ENCODE measurements at regions of chr18 and their contacts with region 1.

Region 1: GRCh38 chr18:75209129-75209950 is at the start of gene PTGR3:
- DNase-seq: peak; percentile 40
- ATAC-seq: peak; percentile 56
- H3K4me3 ChIP-seq: peak within 1 kb of the TSS; percentile 96
- H3K27ac ChIP-seq: peak within 1 kb of the TSS; percentile 86
- H3K4me1 ChIP-seq: peaks cover 6% of the 10 kb centered on the region; the same call in 1 of the 2 replicates
- H3K27me3 ChIP-seq: no peaks in the 10 kb centered on the region
- CTCF ChIP-seq: no peak
- EP300 ChIP-seq: no peak
- POLR2A ChIP-seq: peak; percentile 74
- RAD21 ChIP-seq: no peak
- polyA plus RNA-seq, gene PTGR3: 6.2 to 8.8 TPM

Region 2: GRCh38 chr18:74412116-74412880 is 797.0 kb before region 1 on chr18:
- CTCF ChIA-PET with region 1: no interaction called
- POLR2A ChIA-PET with region 1: no interaction called
- RAD21 ChIA-PET with region 1: no interaction called
- SMC1A ChIA-PET with region 1: no interaction called
- in situ Hi-C with region 1: no loop called
- intact Hi-C with region 1: no loop called
- DNase-seq: no peak
- ATAC-seq: no peak
- H3K4me3 ChIP-seq: no peak overlapping the region
- H3K27ac ChIP-seq: no peak overlapping the region
- H3K4me1 ChIP-seq: peaks cover 10% of the 10 kb centered on the region
- H3K27me3 ChIP-seq: peaks cover 4% of the 10 kb centered on the region in 2 experiments; a peak in 3 of 4 replicates
- CTCF ChIP-seq: no peak
- EP300 ChIP-seq: no peak
- POLR2A ChIP-seq: no peak
- RAD21 ChIP-seq: no peak

Region 3: GRCh38 chr18:74495581-74496507 is 713.5 kb before region 1 on chr18 and contains the start of gene CNDP2:
- CTCF ChIA-PET with region 1: no interaction called
- POLR2A ChIA-PET with region 1: no interaction called
- RAD21 ChIA-PET with region 1: no interaction called
- SMC1A ChIA-PET with region 1: no interaction called
- in situ Hi-C with region 1: no loop called
- intact Hi-C with region 1: loop called (anchors 5 kb)
- DNase-seq: peak; percentile 96
- ATAC-seq: peak; percentile 82
- H3K4me3 ChIP-seq: peak within 1 kb of the TSS; percentile 95
- H3K27ac ChIP-seq: peak within 1 kb of the TSS; percentile 76
- H3K4me1 ChIP-seq: peaks cover 18% of the 10 kb centered on the region
- H3K27me3 ChIP-seq: no peaks in the 10 kb centered on the region
- CTCF ChIP-seq: no peak
- EP300 ChIP-seq: no peak
- POLR2A ChIP-seq: peak; percentile 86
- RAD21 ChIP-seq: no peak
- polyA plus RNA-seq, gene CNDP2: 63.5 to 101 TPM

Region 4: GRCh38 chr18:74652392-74652988 is 556.9 kb before region 1 on chr18:
- CTCF ChIA-PET with region 1: interaction called, 3 read pairs
- POLR2A ChIA-PET with region 1: no interaction called
- RAD21 ChIA-PET with region 1: no interaction called
- SMC1A ChIA-PET with region 1: interaction called, 4 read pairs
- in situ Hi-C with region 1: no loop called
- intact Hi-C with region 1: loop called (anchors 5 kb)
- DNase-seq: no peak
- ATAC-seq: peak; percentile 85
- H3K4me3 ChIP-seq: no peak overlapping the region
- H3K27ac ChIP-seq: no peak overlapping the region
- H3K4me1 ChIP-seq: no peaks in the 10 kb centered on the region
- H3K27me3 ChIP-seq: no peaks in the 10 kb centered on the region
- CTCF ChIP-seq: peak; percentile 30 to 62 (median 58); a peak in 4 of 6 replicates
- EP300 ChIP-seq: no peak
- POLR2A ChIP-seq: no peak
- RAD21 ChIP-seq: peak; percentile 78

Region 5: GRCh38 chr18:74869904-74870863 is 339.2 kb before region 1 on chr18:
- CTCF ChIA-PET with region 1: no interaction called
- POLR2A ChIA-PET with region 1: no interaction called
- RAD21 ChIA-PET with region 1: interaction called, 6 read pairs
- SMC1A ChIA-PET with region 1: no interaction called
- in situ Hi-C with region 1: no loop called
- intact Hi-C with region 1: loop called (anchors 10 kb)
- DNase-seq: peak; percentile 71
- ATAC-seq: peak; percentile 94
- H3K4me3 ChIP-seq: no peak overlapping the region
- H3K27ac ChIP-seq: peak overlapping the region; percentile 64; the same call in 1 of the 2 replicates
- H3K4me1 ChIP-seq: peaks cover 18% of the 10 kb centered on the region
- H3K27me3 ChIP-seq: no peaks in the 10 kb centered on the region
- CTCF ChIP-seq: no peak
- EP300 ChIP-seq: 0 out of 4 replicates have a peak, but pooled peaks of 1 of the 2 experiments have one; percentile 6
- POLR2A ChIP-seq: no peak
- RAD21 ChIP-seq: no peak

Region 6: GRCh38 chr18:75023473-75023872 is 185.9 kb before region 1 on chr18:
- CTCF ChIA-PET with region 1: no interaction called
- POLR2A ChIA-PET with region 1: no interaction called
- RAD21 ChIA-PET with region 1: no interaction called
- SMC1A ChIA-PET with region 1: no interaction called
- in situ Hi-C with region 1: no loop called
- intact Hi-C with region 1: loop called (anchors 5 kb)
- DNase-seq: no peak
- ATAC-seq: peak; percentile 80
- H3K4me3 ChIP-seq: no peak overlapping the region
- H3K27ac ChIP-seq: no peak overlapping the region
- H3K4me1 ChIP-seq: peaks cover 5% of the 10 kb centered on the region; the same call in 1 of the 2 replicates
- H3K27me3 ChIP-seq: no peaks in the 10 kb centered on the region
- CTCF ChIP-seq: no peak
- EP300 ChIP-seq: no peak
- POLR2A ChIP-seq: no peak
- RAD21 ChIP-seq: no peak

Region 7: GRCh38 chr18:76476665-76477561 is 1267.6 kb after region 1 on chr18:
- CTCF ChIA-PET with region 1: no interaction called
- POLR2A ChIA-PET with region 1: no interaction called
- RAD21 ChIA-PET with region 1: no interaction called
- SMC1A ChIA-PET with region 1: no interaction called
- in situ Hi-C with region 1: no loop called
- intact Hi-C with region 1: loop called (anchors 10 kb)
- DNase-seq: no peak
- ATAC-seq: peak; percentile 81
- H3K4me3 ChIP-seq: peak overlapping the region; percentile 54
- H3K27ac ChIP-seq: peak overlapping the region; percentile 83
- H3K4me1 ChIP-seq: peaks cover 24% of the 10 kb centered on the region
- H3K27me3 ChIP-seq: no peaks in the 10 kb centered on the region
- CTCF ChIP-seq: no peak
- EP300 ChIP-seq: no peak
- POLR2A ChIP-seq: peak; percentile 38; the same call in 1 of the 2 replicates
- RAD21 ChIP-seq: no peak

Measured in GM12878 (cell line).